Esophagus squamous epithelium (tissue), 5 donors: ENCODE measurements at regions of chr9 and their contacts with region 1.

Region 1: GRCh38 chr9:95004411-95005277 is 278.1 kb downstream of the AOPEP start:
- DNase-seq: no peak
- H3K4me3 ChIP-seq: peak overlapping the region; percentile 55 to 90 (median 72)
- H3K27ac ChIP-seq: peak overlapping the region; percentile 97 to 100 (median 99)
- H3K4me1 ChIP-seq: peaks cover 0 to 68% (median 9%) of the 10 kb centered on the region in 3 donors
- H3K27me3 ChIP-seq: peaks cover 0 to 13% (median 0%) of the 10 kb centered on the region in 4 donors
- CTCF ChIP-seq: peak in 1 of 6 experiments; percentile 7
- POLR2A ChIP-seq: peak in 2 of 4 donors; percentile 26 to 43

Region 2: DNA sequence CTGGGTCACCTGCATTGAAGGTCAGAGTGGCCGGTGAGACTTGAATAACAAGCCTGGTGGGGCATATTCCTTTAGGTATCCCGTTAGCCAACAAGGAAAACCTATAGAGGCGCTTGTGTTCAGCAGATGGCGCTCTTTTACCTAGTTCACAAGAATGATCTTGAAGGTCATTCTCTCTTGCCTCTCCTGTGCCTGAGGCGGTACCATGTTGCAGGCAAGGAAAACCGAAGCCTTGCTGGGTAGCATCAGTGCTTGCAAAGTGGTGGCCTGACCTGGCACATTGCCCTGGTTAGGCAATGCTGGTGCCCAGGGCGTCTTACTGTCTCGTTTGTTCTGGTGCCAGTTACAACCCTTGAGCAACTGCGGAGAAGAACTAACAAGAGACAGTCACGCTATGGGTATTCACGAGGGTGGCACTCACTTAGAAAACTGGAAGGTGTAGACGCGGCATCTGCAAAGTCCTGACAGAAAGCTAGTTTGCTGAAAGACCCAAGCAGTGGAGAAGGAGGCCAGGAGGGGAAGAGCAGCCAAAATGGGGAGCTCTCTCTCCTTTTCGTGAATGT is 221.5 kb before region 1 on chr9:
- intact Hi-C with region 1: loop called (anchors 10 kb)
- DNase-seq: peak; percentile 23
- H3K4me3 ChIP-seq: no peak overlapping the region
- H3K27ac ChIP-seq: peak overlapping the region; percentile 45 to 75 (median 56)
- H3K4me1 ChIP-seq: peaks cover 0 to 45% (median 10%) of the 10 kb centered on the region in 3 donors
- H3K27me3 ChIP-seq: no peaks in the 10 kb centered on the region
- CTCF ChIP-seq: peak; percentile 33 to 88 (median 77)
- POLR2A ChIP-seq: peak in 1 of 4 donors; percentile 17

Region 3: GRCh38 chr9:94867281-94867841 is 137.3 kb before region 1 on chr9:
- intact Hi-C with region 1: no loop called
- DNase-seq: no peak
- H3K4me3 ChIP-seq: peak overlapping the region in 2 of 4 donors; percentile 7 to 33
- H3K27ac ChIP-seq: peak overlapping the region; percentile 70 to 92 (median 86)
- H3K4me1 ChIP-seq: peaks cover 20 to 81% (median 28%) of the 10 kb centered on the region in 3 donors
- H3K27me3 ChIP-seq: no peaks in the 10 kb centered on the region
- CTCF ChIP-seq: no peak
- POLR2A ChIP-seq: no peak

Region 4: DNA sequence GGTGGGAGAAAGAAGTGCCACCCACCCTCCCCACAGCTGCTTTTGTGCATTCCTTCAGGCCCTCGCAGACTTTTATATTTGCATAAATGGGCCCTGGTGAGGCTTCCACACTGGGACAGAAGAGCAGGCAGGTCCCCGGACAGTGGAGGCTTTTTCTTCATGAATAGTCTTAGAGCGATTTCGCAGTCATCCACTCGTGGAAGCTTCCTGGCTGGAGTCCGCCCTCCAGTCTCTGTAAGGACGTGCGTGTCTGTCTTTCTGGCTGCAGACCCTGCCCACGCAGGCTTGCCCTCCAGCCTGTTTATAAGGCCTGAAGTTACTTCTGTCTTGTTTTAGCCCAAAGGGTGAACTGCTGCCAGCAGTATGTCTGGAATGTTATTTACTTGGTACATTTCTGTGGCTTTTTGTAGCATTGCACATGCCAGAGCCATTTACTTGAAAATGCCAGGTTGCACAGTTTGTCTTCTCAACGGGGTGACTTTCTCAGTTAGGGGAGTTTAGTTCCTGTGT is 82.5 kb before region 1 on chr9:
- intact Hi-C with region 1: loop called (anchors 10 kb)
- DNase-seq: no peak
- H3K4me3 ChIP-seq: peak overlapping the region in 1 of 4 donors; percentile 24
- H3K27ac ChIP-seq: peak overlapping the region; percentile 72 to 90 (median 86)
- H3K4me1 ChIP-seq: peaks cover 44 to 98% (median 69%) of the 10 kb centered on the region in 3 donors
- H3K27me3 ChIP-seq: no peaks in the 10 kb centered on the region
- CTCF ChIP-seq: no peak
- POLR2A ChIP-seq: no peak